PC-3 (cell line): ENCODE measurements at regions of chr3 and their contacts with region 1.

Region 1: GRCh38 chr3:130905551-130905950 is 11.7 kb downstream of the ATP2C1 start:
- DNase-seq: peak; percentile 61
- ATAC-seq: peak; percentile 95
- H3K4me3 ChIP-seq: no peak overlapping the region; the same call in 1 of the 2 replicates
- H3K27ac ChIP-seq: peak overlapping the region; percentile 92
- H3K4me1 ChIP-seq: peaks cover 32% of the 10 kb centered on the region
- H3K27me3 ChIP-seq: no peaks in the 10 kb centered on the region
- CTCF ChIP-seq: no peak

Region 2: DNA sequence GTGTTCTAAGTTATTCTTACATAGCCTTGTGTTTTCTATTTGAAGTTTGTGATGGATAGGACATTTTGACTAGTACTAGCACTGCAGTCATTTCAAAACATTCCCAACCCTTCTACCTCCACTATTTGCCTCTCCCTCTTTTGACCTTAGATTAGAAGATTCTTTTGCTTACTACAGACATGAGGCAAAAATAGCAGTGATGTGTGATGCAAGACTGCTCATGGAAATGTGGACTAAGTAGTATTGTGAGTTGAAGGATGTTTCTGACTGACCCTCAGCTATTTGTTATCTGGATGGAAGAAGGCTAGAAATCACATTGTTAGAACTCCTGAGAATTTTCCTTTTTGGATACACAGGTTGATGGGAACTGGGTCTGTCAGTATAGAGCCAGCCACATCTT is 34.2 kb after region 1 on chr3:
- CTCF ChIA-PET with region 1: no interaction called
- POLR2A ChIA-PET with region 1: no interaction called
- intact Hi-C with region 1: loop called (anchors 5 kb)
- DNase-seq: no peak
- ATAC-seq: no peak
- H3K4me3 ChIP-seq: no peak overlapping the region
- H3K27ac ChIP-seq: no peak overlapping the region
- H3K4me1 ChIP-seq: peaks cover 19% of the 10 kb centered on the region
- H3K27me3 ChIP-seq: no peaks in the 10 kb centered on the region
- CTCF ChIP-seq: no peak

Region 3: GRCh38 chr3:130956281-130956680 is 50.7 kb after region 1 on chr3:
- CTCF ChIA-PET with region 1: no interaction called
- POLR2A ChIA-PET with region 1: no interaction called
- intact Hi-C with region 1: loop called (anchors 2 kb)
- DNase-seq: peak; percentile 22
- ATAC-seq: peak; percentile 55
- H3K4me3 ChIP-seq: no peak overlapping the region
- H3K27ac ChIP-seq: peak overlapping the region; percentile 72
- H3K4me1 ChIP-seq: peaks cover 18% of the 10 kb centered on the region
- H3K27me3 ChIP-seq: no peaks in the 10 kb centered on the region
- CTCF ChIP-seq: no peak

Region 4: DNA sequence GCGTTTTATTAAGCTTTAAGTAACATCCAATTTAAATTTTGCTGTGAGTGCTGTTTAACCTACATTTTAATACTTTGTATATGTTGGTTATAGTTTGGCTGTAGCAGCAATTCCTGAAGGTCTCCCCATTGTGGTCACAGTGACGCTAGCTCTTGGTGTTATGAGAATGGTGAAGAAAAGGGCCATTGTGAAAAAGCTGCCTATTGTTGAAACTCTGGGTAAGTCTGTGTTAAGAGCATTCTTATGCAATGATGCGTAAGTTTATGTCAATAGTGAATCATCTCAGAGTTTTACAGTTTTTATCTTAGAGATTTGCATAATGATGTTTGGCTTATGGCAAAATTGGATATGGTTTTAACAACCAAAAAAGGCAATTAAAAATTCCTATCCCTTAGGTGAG is 58.3 kb after region 1 on chr3:
- CTCF ChIA-PET with region 1: no interaction called
- POLR2A ChIA-PET with region 1: no interaction called
- intact Hi-C with region 1: loop called (anchors 1 kb)
- DNase-seq: peak; percentile 93
- ATAC-seq: peak; percentile 98
- H3K4me3 ChIP-seq: peak overlapping the region; percentile 33; the same call in 1 of the 2 replicates
- H3K27ac ChIP-seq: peak overlapping the region; percentile 98
- H3K4me1 ChIP-seq: peaks cover 22% of the 10 kb centered on the region
- H3K27me3 ChIP-seq: no peaks in the 10 kb centered on the region
- CTCF ChIP-seq: no peak

Region 5: DNA sequence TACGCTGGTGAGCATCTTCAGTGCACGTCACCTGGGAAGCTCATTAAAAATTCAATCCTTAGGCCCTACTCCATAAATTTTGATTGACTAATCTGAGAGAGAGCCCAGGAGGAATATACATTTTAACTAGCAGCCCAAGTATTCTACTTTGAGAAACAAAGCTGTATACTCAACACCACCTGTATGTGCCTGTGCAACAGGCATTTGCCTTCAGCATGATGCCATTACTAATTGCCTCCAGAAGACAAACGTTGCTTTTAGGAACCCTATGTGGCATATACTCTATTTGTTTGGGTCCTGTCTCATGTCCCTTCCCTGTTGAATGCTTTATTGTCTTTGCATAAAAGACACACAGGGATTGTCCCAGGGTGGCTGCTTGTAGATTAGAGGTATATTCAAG is 113.4 kb after region 1 on chr3:
- CTCF ChIA-PET with region 1: no interaction called
- POLR2A ChIA-PET with region 1: no interaction called
- intact Hi-C with region 1: loop called (anchors 5 kb)
- DNase-seq: no peak
- ATAC-seq: no peak
- H3K4me3 ChIP-seq: no peak overlapping the region
- H3K27ac ChIP-seq: no peak overlapping the region
- H3K4me1 ChIP-seq: no peaks in the 10 kb centered on the region
- H3K27me3 ChIP-seq: no peaks in the 10 kb centered on the region
- CTCF ChIP-seq: no peak